PC-3 (cell line): ENCODE measurements at regions of chr2 and their contacts with region 1.

Region 1: DNA sequence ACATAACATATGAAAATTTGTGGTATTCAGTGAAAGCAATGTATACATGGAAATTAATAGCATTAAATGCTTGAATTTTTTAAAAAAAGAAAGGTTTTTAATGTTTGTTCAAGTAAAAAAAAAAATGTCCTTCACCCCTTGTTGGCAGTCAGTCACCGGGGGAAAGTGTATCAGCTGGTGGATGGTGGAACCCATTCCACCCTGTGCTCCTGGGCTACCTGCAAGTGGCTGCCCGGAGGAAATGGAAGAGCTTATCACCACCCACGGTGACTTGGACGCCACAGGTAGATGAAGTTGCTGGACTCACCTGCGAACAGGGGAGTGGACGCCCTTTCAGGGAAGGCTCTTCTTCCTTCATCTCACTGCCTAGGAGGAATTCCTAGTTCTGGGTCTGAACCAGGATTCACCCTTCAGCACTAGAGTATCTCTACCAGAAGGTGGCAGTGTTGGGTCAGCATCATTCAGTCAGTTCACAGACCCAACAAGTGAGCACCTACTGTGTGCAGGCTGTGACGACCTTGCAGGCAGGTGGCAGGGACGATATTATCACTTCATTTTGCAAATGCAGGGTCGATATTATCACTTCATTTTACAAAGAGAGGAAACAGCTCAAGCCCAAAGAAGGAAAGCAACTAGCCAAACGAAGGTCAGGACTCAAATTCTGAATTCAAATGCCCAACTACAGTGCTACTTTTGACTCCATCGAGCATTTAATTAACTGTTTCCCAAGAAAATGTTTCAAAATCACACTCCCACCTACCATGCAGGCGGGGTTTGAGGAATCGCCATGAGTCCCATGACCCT is 35.8 kb downstream of the CIB4 start:
- DNase-seq: peak; percentile 81
- ATAC-seq: peak; percentile 68
- H3K4me3 ChIP-seq: no peak overlapping the region
- H3K27ac ChIP-seq: no peak overlapping the region
- H3K4me1 ChIP-seq: peaks cover 21% of the 10 kb centered on the region
- H3K27me3 ChIP-seq: peaks cover 5% of the 10 kb centered on the region; the same call in 1 of the 2 replicates
- CTCF ChIP-seq: peak; percentile 97

Region 2: GRCh38 chr2:25772078-25772477 is 833.3 kb before region 1 on chr2:
- CTCF ChIA-PET with region 1: no interaction called
- POLR2A ChIA-PET with region 1: no interaction called
- intact Hi-C with region 1: no loop called
- DNase-seq: no peak
- ATAC-seq: no peak
- H3K4me3 ChIP-seq: no peak overlapping the region
- H3K27ac ChIP-seq: no peak overlapping the region
- H3K4me1 ChIP-seq: no peaks in the 10 kb centered on the region
- H3K27me3 ChIP-seq: no peaks in the 10 kb centered on the region
- CTCF ChIP-seq: no peak

Region 3: DNA sequence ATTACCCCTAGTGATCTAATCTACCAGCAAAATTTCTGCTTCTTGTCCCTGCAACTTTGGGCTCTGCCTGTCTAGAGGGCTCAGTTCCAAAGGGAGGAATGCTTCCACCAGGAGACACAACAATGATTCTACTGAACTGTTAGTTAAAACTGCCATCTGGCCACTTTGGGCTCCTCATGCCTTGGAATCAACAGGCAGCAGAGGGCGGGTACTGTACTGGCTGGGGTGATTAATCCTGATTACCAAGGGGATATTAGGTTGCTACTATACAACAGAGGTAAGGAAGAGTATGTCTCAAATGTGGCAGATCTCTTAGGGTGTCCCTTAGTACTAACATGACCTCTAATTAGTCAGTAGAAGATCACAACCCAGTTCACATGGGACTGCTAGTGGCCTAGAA is 382.4 kb before region 1 on chr2:
- CTCF ChIA-PET with region 1: no interaction called
- POLR2A ChIA-PET with region 1: no interaction called
- intact Hi-C with region 1: no loop called
- DNase-seq: no peak
- ATAC-seq: no peak
- H3K4me3 ChIP-seq: no peak overlapping the region
- H3K27ac ChIP-seq: no peak overlapping the region
- H3K4me1 ChIP-seq: no peaks in the 10 kb centered on the region
- H3K27me3 ChIP-seq: no peaks in the 10 kb centered on the region
- CTCF ChIP-seq: no peak

Region 4: GRCh38 chr2:26652361-26653041 is 47.1 kb after region 1 on chr2:
- CTCF ChIA-PET with region 1: no interaction called
- POLR2A ChIA-PET with region 1: no interaction called
- intact Hi-C with region 1: no loop called
- DNase-seq: no peak
- ATAC-seq: no peak
- H3K4me3 ChIP-seq: no peak overlapping the region
- H3K27ac ChIP-seq: no peak overlapping the region
- H3K4me1 ChIP-seq: no peaks in the 10 kb centered on the region
- H3K27me3 ChIP-seq: peaks cover 27% of the 10 kb centered on the region
- CTCF ChIP-seq: no peak

Region 5: GRCh38 chr2:26745609-26746327 is 140.4 kb after region 1 on chr2:
- CTCF ChIA-PET with region 1: interaction called, 20 read pairs
- POLR2A ChIA-PET with region 1: interaction called, 4 read pairs
- intact Hi-C with region 1: loop called (anchors 1 kb)
- DNase-seq: peak; percentile 86
- ATAC-seq: peak; percentile 97
- H3K4me3 ChIP-seq: no peak overlapping the region
- H3K27ac ChIP-seq: no peak overlapping the region
- H3K4me1 ChIP-seq: no peaks in the 10 kb centered on the region
- H3K27me3 ChIP-seq: no peaks in the 10 kb centered on the region
- CTCF ChIP-seq: peak; percentile 93

Region 6: DNA sequence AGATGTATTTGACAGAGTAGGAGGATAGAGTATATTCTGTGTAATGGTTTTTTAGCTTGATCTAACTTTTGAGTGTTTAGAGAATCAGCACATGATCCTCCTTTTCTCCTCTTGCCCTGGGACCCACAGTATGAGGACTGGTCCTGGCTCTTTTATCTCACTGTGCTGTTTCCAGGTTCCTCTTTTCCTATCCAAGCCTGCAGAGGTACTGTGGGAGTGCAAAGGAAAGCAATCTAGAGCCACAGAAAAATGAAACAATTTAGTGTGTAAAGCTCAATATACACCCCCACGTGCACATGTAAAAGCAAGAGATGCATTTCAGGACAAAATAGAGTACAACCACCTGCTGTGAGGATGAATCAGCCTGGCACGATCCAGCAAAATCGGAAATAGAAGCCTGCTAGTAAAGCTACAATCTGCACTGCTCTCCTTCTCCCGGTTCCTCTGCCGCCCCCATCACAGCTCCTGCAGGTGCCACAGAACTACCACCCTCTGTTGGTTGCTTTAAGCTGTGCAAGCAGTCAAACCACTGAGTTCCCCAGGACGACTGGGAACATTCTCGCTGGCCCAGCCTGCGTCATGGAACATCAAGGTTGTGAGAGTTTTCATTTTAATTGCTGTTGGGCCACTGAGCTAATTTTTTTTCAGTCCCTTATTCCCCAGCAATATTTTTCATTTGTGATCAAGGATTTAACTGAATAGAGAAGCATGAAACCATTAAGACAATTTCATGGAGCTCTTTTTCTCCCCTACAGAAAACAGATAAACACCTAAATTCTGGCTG is 317.2 kb after region 1 on chr2:
- CTCF ChIA-PET with region 1: interaction called, 11 read pairs
- POLR2A ChIA-PET with region 1: no interaction called
- intact Hi-C with region 1: no loop called
- DNase-seq: peak; percentile 65
- ATAC-seq: peak; percentile 93
- H3K4me3 ChIP-seq: no peak overlapping the region
- H3K27ac ChIP-seq: no peak overlapping the region
- H3K4me1 ChIP-seq: no peaks in the 10 kb centered on the region
- H3K27me3 ChIP-seq: peaks cover 22% of the 10 kb centered on the region
- CTCF ChIP-seq: peak; percentile 73